ENCODE measurements at regions of chr4 and their contacts with region 1.

Region 1: GRCh38 chr4:68375667-68376559 is 26.0 kb upstream of the YTHDC1 start:
- DNase-seq: peak; percentile 67
- H3K4me3 ChIP-seq: no peak overlapping the region
- H3K27ac ChIP-seq: no peak overlapping the region
- H3K4me1 ChIP-seq: no peaks in the 10 kb centered on the region
- H3K27me3 ChIP-seq: peaks cover 0 to 15% of the 10 kb centered on the region in 2 experiments
- CTCF ChIP-seq: peak; percentile 46 to 75
- POLR2A ChIP-seq: no peak

Region 2: GRCh38 chr4:67988991-67989390 is 386.9 kb before region 1 on chr4:
- CTCF ChIA-PET with region 1: no interaction called
- POLR2A ChIA-PET with region 1: no interaction called
- dilution Hi-C with region 1: no loop called
- intact Hi-C with region 1: loop called (anchors 5 kb)
- DNase-seq: no peak
- H3K4me3 ChIP-seq: no peak overlapping the region
- H3K27ac ChIP-seq: no peak overlapping the region
- H3K4me1 ChIP-seq: no peaks in the 10 kb centered on the region
- H3K27me3 ChIP-seq: no peaks in the 10 kb centered on the region
- CTCF ChIP-seq: no peak
- POLR2A ChIP-seq: no peak

Region 3: DNA sequence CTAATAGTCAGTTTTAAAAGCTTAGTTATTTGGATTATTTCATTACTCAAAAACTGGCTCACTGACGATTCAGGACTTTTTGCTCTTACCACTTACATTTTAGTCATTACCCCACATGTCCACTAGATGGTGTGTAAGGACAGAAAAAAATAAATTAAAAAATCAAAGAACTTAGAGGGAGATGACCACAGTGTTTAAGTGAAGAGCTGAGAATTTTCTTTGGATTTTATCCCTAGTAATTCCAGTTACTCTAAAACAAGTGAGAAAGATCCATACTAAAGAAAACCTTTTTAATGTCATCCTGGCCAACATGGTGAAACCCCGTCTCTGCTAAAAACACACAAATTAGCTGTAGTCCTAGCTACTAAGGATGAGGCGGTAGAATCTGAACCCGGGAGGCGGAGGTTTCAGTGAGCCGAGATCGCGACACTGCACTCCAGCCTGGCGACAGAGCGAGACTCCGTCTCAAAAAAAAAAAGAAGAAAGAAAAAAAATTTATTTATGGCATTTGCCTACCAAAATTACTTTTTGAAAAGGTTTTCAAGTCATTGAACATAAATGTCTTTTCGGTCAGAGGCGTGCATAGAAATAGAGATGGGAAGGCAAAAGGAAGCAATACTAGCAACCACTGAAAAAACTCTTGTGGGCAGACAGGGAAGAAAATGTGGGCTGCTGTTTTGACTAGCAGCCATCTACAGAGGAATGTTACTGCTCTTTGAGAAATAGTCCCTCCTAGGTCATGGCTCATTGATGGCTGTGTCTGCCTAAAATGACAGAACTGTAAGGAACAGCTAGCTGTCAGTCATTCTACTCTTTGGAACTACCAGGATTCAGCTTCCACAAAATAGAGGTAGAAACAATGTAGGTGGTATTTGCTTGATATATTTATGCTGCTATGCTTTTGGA is 103.8 kb before region 1 on chr4:
- CTCF ChIA-PET with region 1: interaction called, 168 read pairs
- POLR2A ChIA-PET with region 1: no interaction called
- dilution Hi-C with region 1: no loop called
- intact Hi-C with region 1: loop called (anchors 1 kb)
- DNase-seq: peak; percentile 73
- H3K4me3 ChIP-seq: no peak overlapping the region
- H3K27ac ChIP-seq: no peak overlapping the region
- H3K4me1 ChIP-seq: no peaks in the 10 kb centered on the region
- H3K27me3 ChIP-seq: peaks cover 10 to 15% of the 10 kb centered on the region in 2 experiments
- CTCF ChIP-seq: peak; percentile 37 to 42
- POLR2A ChIP-seq: no peak

Region 4: DNA sequence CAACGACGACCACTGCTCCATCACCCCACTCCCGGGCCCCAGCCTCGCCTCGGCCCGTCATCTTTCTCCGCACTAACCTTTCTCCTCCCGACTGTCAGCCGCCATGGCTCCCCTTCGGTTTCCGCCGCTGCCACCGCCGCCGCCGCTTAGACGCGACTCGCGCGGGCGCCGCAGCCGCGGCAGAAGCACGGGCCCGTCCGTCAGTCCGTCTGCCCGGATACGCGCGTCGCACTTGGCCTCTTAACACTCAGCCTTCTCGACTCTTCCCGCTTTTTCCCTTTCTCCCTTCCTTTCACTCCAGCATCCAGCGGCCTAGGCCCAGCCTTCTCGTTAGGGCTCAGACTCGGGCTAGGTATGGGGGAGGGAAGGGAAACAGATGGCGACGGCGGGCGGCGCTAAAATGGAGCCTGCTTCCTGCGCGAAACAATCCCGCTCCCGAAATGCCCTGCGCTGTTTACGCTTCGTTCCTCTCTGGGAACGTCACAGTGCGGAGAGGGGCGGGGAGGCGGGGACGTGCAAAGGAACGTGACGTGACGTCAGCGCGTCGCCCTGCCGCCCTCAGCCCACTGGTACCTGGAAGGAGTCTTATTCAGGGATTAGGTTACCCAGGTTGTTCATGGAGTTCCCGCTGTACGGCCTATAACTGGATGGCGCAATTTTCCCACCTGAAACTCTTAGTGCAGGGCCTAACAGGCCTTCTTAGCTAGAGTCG is 26.1 kb before region 1 on chr4 and contains the start of gene YTHDC1:
- CTCF ChIA-PET with region 1: interaction called, 9 read pairs
- POLR2A ChIA-PET with region 1: no interaction called
- dilution Hi-C with region 1: no loop called
- intact Hi-C with region 1: loop called (anchors 1 kb)
- DNase-seq: peak; percentile 98
- H3K4me3 ChIP-seq: peak within 1 kb of the TSS; percentile 65 to 99 (median 82)
- H3K27ac ChIP-seq: peak within 1 kb of the TSS; percentile 89
- H3K4me1 ChIP-seq: peaks cover 18% of the 10 kb centered on the region
- H3K27me3 ChIP-seq: peaks cover 2% of the 10 kb centered on the region in 2 experiments
- CTCF ChIP-seq: no peak
- POLR2A ChIP-seq: peak; percentile 57
- total RNA-seq, gene YTHDC1: 60.4 and 68.7 TPM in 2 replicates

Region 5: GRCh38 chr4:68388347-68388865 is 12.5 kb after region 1 on chr4:
- CTCF ChIA-PET with region 1: interaction called, 11 read pairs
- POLR2A ChIA-PET with region 1: no interaction called
- dilution Hi-C with region 1: no loop called
- intact Hi-C with region 1: no loop called
- DNase-seq: no peak
- H3K4me3 ChIP-seq: no peak overlapping the region
- H3K27ac ChIP-seq: no peak overlapping the region
- H3K4me1 ChIP-seq: no peaks in the 10 kb centered on the region
- H3K27me3 ChIP-seq: no peaks in the 10 kb centered on the region
- CTCF ChIP-seq: no peak
- POLR2A ChIP-seq: no peak